GM12878 (cell line): ENCODE measurements at regions of chr16 and their contacts with region 1.

Region 1: GRCh38 chr16:17467923-17468540 is 2.7 kb downstream of the XYLT1 start:
- DNase-seq: no peak
- ATAC-seq: peak; percentile 65
- H3K4me3 ChIP-seq: peak overlapping the region; percentile 68; the same call in 1 of the 2 replicates
- H3K27ac ChIP-seq: no peak overlapping the region
- H3K4me1 ChIP-seq: peaks cover 17% of the 10 kb centered on the region
- H3K27me3 ChIP-seq: peaks cover 0 to 3% of the 10 kb centered on the region in 2 experiments; a peak in 3 of 4 replicates
- CTCF ChIP-seq: peak; percentile 72 to 76 (median 72)
- EP300 ChIP-seq: no peak
- POLR2A ChIP-seq: no peak
- RAD21 ChIP-seq: peak; percentile 84

Region 2: GRCh38 chr16:17070882-17071592 is 397.0 kb before region 1 on chr16:
- CTCF ChIA-PET with region 1: no interaction called
- POLR2A ChIA-PET with region 1: no interaction called
- RAD21 ChIA-PET with region 1: interaction called, 4 read pairs
- SMC1A ChIA-PET with region 1: no interaction called
- in situ Hi-C with region 1: no loop called
- intact Hi-C with region 1: loop called (anchors 10 kb)
- DNase-seq: peak; percentile 98
- ATAC-seq: peak; percentile 81
- H3K4me3 ChIP-seq: peak overlapping the region; percentile 77
- H3K27ac ChIP-seq: peak overlapping the region; percentile 95
- H3K4me1 ChIP-seq: peaks cover 44% of the 10 kb centered on the region
- H3K27me3 ChIP-seq: no peaks in the 10 kb centered on the region
- CTCF ChIP-seq: 0 out of 6 replicates have a peak, but pooled peaks of 1 of the 3 experiments have one; percentile 16
- EP300 ChIP-seq: peak; percentile 89 to 94
- POLR2A ChIP-seq: no peak
- RAD21 ChIP-seq: 0 out of 2 replicates have a peak, but pooled peaks have one; percentile 23

Region 3: DNA sequence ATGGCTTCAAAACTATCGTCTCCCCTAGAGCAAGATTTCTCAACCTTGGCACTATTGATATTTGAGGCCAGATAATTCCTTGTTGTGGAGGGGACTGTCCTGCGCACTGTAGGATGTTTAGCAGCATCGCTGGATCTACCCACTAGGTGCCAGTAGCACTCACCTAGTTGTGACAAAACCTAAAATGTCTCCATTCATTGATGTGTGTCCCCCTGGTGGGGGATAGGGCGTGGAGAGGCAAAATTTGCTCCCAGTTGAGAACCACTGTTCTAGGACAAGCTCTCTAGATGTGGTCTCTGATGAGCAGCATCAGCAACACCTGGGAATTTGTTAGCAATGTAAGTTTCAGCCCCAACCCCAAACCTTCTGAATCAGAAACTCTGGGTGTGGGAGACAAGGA is 256.2 kb before region 1 on chr16:
- CTCF ChIA-PET with region 1: interaction called, 3 read pairs
- POLR2A ChIA-PET with region 1: no interaction called
- RAD21 ChIA-PET with region 1: interaction called, 9 read pairs
- SMC1A ChIA-PET with region 1: interaction called, 19 read pairs
- in situ Hi-C with region 1: no loop called
- intact Hi-C with region 1: loop called (anchors 5 kb)
- DNase-seq: no peak
- ATAC-seq: peak; percentile 88
- H3K4me3 ChIP-seq: no peak overlapping the region
- H3K27ac ChIP-seq: no peak overlapping the region
- H3K4me1 ChIP-seq: no peaks in the 10 kb centered on the region
- H3K27me3 ChIP-seq: no peaks in the 10 kb centered on the region
- CTCF ChIP-seq: peak; percentile 57 to 62 (median 62); a peak in 5 of 6 replicates
- EP300 ChIP-seq: no peak
- POLR2A ChIP-seq: no peak
- RAD21 ChIP-seq: peak; percentile 61

Region 4: GRCh38 chr16:17277977-17278381 is 190.1 kb before region 1 on chr16:
- CTCF ChIA-PET with region 1: interaction called, 62 read pairs
- POLR2A ChIA-PET with region 1: interaction called, 8 read pairs
- RAD21 ChIA-PET with region 1: interaction called, 62 read pairs
- SMC1A ChIA-PET with region 1: interaction called, 73 read pairs
- in situ Hi-C with region 1: no loop called
- intact Hi-C with region 1: loop called (anchors 5 kb)
- DNase-seq: no peak
- ATAC-seq: peak; percentile 77
- H3K4me3 ChIP-seq: no peak overlapping the region
- H3K27ac ChIP-seq: no peak overlapping the region
- H3K4me1 ChIP-seq: peaks cover 39% of the 10 kb centered on the region
- H3K27me3 ChIP-seq: no peaks in the 10 kb centered on the region
- CTCF ChIP-seq: peak; percentile 59 to 66 (median 62); a peak in 5 of 6 replicates
- EP300 ChIP-seq: no peak
- POLR2A ChIP-seq: no peak
- RAD21 ChIP-seq: peak; percentile 70

Region 5: DNA sequence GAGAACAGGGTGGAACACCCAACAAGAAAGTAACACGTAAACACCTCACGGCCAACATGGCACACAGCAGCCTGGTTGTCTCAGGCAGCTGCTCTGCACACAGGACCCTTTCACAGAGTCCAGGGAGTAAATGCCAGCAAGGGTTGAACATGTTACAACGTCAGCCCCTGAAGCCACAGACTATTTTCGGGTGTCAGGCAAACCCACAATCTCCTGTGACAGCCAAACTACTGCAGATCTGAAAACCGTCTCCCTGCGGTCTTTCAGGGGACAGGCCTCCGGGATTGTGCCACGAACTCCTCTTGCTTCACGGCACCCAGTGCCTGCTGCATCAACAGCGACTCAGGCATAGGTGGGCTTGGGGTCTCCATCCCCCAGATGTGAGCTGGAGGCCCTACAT is 125.0 kb before region 1 on chr16:
- CTCF ChIA-PET with region 1: interaction called, 47 read pairs
- POLR2A ChIA-PET with region 1: interaction called, 13 read pairs
- RAD21 ChIA-PET with region 1: interaction called, 40 read pairs
- SMC1A ChIA-PET with region 1: interaction called, 39 read pairs
- in situ Hi-C with region 1: no loop called
- intact Hi-C with region 1: loop called (anchors 2 kb)
- DNase-seq: peak; percentile 63
- ATAC-seq: peak; percentile 81
- H3K4me3 ChIP-seq: no peak overlapping the region
- H3K27ac ChIP-seq: peak overlapping the region; percentile 52
- H3K4me1 ChIP-seq: peaks cover 68% of the 10 kb centered on the region
- H3K27me3 ChIP-seq: no peaks in the 10 kb centered on the region
- CTCF ChIP-seq: no peak
- EP300 ChIP-seq: peak; percentile 88 to 96
- POLR2A ChIP-seq: peak; percentile 19; the same call in 1 of the 2 replicates
- RAD21 ChIP-seq: peak; percentile 25; the same call in 1 of the 2 replicates

Region 6: GRCh38 chr16:17377360-17378324 is 90.4 kb before region 1 on chr16:
- CTCF ChIA-PET with region 1: interaction called, 32 read pairs
- POLR2A ChIA-PET with region 1: interaction called, 6 read pairs
- RAD21 ChIA-PET with region 1: interaction called, 43 read pairs
- SMC1A ChIA-PET with region 1: interaction called, 59 read pairs
- in situ Hi-C with region 1: no loop called
- intact Hi-C with region 1: no loop called
- DNase-seq: peak; percentile 80
- ATAC-seq: peak; percentile 90
- H3K4me3 ChIP-seq: 0 out of 2 replicates have a peak overlapping the region, but pooled peaks have one; percentile 43
- H3K27ac ChIP-seq: peak overlapping the region; percentile 72
- H3K4me1 ChIP-seq: peaks cover 35% of the 10 kb centered on the region
- H3K27me3 ChIP-seq: no peaks in the 10 kb centered on the region
- CTCF ChIP-seq: no peak
- EP300 ChIP-seq: peak; percentile 84 to 91; a peak in 2 of 4 replicates
- POLR2A ChIP-seq: no peak
- RAD21 ChIP-seq: peak; percentile 21; the same call in 1 of the 2 replicates

Region 7: GRCh38 chr16:17439580-17439979 is 28.5 kb before region 1 on chr16:
- CTCF ChIA-PET with region 1: interaction called, 14 read pairs
- POLR2A ChIA-PET with region 1: no interaction called
- RAD21 ChIA-PET with region 1: interaction called, 5 read pairs
- SMC1A ChIA-PET with region 1: interaction called, 4 read pairs
- in situ Hi-C with region 1: no loop called
- intact Hi-C with region 1: no loop called
- DNase-seq: no peak
- ATAC-seq: peak; percentile 75
- H3K4me3 ChIP-seq: no peak overlapping the region
- H3K27ac ChIP-seq: no peak overlapping the region
- H3K4me1 ChIP-seq: peaks cover 13% of the 10 kb centered on the region
- H3K27me3 ChIP-seq: no peaks in the 10 kb centered on the region
- CTCF ChIP-seq: no peak
- EP300 ChIP-seq: peak in 1 of 2 experiments; percentile 50; a peak in 1 of 4 replicates
- POLR2A ChIP-seq: no peak
- RAD21 ChIP-seq: no peak

Region 8: DNA sequence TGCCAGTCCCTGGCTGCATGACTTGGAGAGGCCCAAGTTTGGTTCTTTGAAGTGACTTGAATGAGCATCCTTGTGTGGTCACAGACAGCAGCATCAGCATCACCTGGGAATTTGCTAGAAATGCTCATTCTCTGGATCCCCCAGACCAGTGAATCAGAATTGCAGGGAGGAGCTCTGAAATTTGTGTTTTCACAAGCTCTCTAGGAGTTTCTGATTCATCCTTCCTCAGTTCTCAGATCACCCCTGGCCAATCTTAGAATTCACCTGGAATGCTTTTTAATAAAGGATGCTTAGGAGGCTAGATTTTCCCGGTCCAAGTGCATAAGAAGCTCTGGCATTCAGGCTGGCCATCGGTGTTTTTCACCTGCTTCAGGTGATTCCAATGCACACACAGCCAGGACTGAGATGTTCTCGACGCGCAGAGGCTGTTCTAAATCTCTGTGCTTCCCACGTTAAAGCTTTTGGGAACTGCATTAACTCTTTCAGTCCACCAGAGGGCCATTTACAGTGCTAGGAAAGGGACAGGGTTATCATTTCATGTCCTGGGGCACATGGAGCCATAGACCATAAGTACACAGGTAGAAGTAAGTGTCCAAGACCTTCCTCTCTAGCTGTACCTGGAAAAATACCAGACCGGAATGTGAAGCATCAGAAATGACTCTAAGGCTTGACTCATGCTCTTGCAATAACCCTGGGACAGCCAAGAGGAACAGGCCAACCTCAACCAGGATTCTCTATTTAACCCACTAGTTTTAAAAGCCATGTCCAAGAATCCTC is 88.4 kb after region 1 on chr16:
- CTCF ChIA-PET with region 1: no interaction called
- POLR2A ChIA-PET with region 1: no interaction called
- RAD21 ChIA-PET with region 1: no interaction called
- SMC1A ChIA-PET with region 1: no interaction called
- in situ Hi-C with region 1: no loop called
- intact Hi-C with region 1: no loop called
- DNase-seq: no peak
- ATAC-seq: peak; percentile 82
- H3K4me3 ChIP-seq: no peak overlapping the region
- H3K27ac ChIP-seq: no peak overlapping the region
- H3K4me1 ChIP-seq: peaks cover 7% of the 10 kb centered on the region; the same call in 1 of the 2 replicates
- H3K27me3 ChIP-seq: no peaks in the 10 kb centered on the region; a peak in 2 of 4 replicates
- CTCF ChIP-seq: peak; percentile 51 to 67 (median 62)
- EP300 ChIP-seq: no peak
- POLR2A ChIP-seq: no peak
- RAD21 ChIP-seq: peak; percentile 49